ENCODE measurements at regions of chr17 and their contacts with region 1.

Region 1: GRCh38 chr17:67376737-67377487 is at the start of gene PITPNC1:
- DNase-seq: no peak
- H3K4me3 ChIP-seq: peak within 1 kb of the TSS; percentile 75
- CTCF ChIP-seq: peak; percentile 1

Region 2: GRCh38 chr17:67390646-67391384 is 13.9 kb after region 1 on chr17:
- CTCF ChIA-PET with region 1: interaction called, 92 read pairs
- POLR2A ChIA-PET with region 1: no interaction called
- DNase-seq: peak; percentile 91
- H3K4me3 ChIP-seq: peak overlapping the region; percentile 15; the same call in 1 of the 2 replicates
- CTCF ChIP-seq: no peak

Region 3: DNA sequence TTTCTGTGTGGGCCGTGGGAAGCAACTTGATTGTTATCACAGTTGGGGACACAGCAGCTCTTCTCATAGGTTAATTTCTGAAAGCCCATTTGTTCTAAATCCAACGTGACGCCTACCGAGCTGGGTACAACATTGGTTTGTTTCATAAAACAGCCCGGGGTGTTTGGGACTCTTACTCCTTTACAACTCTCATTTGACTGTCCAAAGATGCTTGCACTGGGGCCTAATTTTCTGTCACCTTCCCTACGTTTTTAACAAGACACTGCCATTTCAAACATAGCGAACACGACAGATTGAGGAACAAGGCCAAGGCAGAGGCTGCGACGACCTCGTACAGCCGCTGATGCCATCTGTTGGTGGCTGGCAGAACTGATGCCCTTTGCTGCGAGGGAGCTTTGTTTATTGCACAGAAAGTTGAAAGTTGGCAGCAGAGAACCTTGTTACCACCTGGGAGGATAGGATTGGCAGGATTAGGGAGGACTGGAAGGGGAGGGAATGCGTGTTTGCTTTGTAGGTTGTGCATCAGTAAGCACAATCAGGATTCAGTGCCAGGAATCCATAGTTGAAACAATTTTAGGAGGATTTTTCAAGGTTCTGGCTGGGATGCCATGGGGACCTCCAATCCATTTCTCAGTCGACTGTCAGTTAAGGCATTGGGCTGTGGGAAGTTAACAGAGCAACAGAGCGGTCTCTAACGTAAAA is 98.5 kb after region 1 on chr17:
- CTCF ChIA-PET with region 1: interaction called, 129 read pairs
- POLR2A ChIA-PET with region 1: no interaction called
- DNase-seq: no peak
- H3K4me3 ChIP-seq: no peak overlapping the region
- CTCF ChIP-seq: peak; percentile 95

Region 4: GRCh38 chr17:67584991-67585602 is 208.2 kb after region 1 on chr17:
- CTCF ChIA-PET with region 1: interaction called, 11 read pairs
- POLR2A ChIA-PET with region 1: no interaction called
- DNase-seq: no peak
- H3K4me3 ChIP-seq: no peak overlapping the region
- CTCF ChIP-seq: no peak

Region 5: DNA sequence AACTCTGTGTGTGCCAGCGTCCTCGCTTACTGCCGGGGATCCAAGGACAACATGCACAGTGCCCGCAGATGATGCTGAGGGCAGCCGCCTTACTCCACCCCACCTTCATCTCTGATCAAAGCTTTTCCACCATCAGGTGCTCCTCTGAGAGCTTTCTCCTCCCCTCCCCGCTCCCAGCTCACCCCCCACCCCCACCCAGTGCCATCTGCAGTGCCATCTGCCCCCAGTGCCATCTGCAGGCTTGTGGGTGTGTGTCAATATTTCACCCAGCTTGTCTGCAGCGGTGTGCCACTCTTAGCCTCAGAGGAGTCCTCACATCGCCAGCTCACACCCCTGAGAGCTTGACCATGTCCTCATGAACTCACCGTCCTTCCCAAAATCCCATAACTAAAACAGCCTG is 242.6 kb after region 1 on chr17:
- CTCF ChIA-PET with region 1: interaction called, 10 read pairs
- POLR2A ChIA-PET with region 1: no interaction called
- DNase-seq: no peak
- H3K4me3 ChIP-seq: no peak overlapping the region
- CTCF ChIP-seq: no peak

Region 6: DNA sequence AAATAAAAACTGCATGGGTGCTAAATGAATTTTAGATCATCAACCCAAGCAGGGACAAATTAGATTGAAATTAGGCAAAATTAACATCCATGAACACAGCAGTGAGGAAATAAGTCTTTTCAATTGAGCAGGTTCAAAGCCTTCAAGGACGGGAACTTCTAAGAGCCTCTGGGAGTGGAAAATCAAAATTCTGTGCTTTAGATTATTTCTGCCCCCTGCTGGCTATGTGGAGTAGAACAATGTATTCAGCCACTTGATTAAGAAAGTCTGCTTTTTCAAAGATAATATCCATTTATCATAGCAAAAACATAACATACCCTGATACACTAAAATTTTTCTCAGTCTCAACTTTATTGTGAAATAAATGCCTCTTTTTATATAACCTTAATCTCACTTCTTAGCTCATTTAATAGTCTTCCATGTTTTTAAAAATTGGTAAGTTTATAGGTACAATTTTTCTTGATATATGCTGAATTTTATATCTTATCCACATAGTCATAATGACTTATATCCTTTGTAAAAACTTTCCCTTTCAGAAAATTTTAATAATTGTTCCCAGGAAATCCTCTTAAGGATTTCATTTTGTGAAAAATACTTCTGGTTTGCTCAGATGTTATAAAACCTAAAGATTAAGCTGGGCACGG is 312.7 kb after region 1 on chr17:
- CTCF ChIA-PET with region 1: interaction called, 69 read pairs
- POLR2A ChIA-PET with region 1: no interaction called
- DNase-seq: peak; percentile 10
- H3K4me3 ChIP-seq: no peak overlapping the region
- CTCF ChIP-seq: peak; percentile 58

Region 7: DNA sequence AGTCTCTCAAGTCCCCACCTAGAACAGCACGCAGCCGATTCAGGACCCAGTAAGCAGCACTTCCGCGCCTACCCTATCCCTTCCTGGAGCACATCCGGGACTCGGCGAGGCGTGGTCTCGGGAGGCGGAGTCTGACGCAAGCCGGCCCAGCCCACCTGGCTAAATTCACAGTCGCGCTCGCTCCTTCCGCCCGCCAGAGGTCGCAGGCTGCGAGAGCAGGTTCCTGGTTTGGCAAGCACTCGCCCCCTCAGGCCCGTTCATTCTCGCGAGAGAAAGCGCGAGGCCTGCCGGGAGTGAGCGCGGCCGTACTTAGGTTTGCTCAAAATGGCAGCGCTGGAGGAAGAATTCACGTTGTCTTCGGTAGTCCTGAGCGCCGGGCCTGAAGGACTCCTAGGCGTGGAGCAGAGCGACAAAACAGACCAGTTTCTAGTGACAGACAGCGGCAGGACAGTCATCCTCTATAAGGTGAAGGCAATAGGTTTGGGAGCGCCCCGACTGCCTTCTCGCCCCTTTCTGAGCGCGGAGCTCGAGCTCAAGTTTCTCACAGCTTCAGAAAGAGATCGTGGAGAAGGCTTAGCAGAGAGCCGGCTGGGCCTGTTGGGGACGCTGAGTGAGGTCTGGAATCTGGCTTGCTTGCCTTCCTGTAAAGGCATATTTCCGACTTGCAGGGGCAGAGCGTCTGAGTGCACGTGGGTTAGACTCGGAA is 340.9 kb after region 1 on chr17 and contains the start of gene NOL11:
- CTCF ChIA-PET with region 1: interaction called, 18 read pairs
- POLR2A ChIA-PET with region 1: no interaction called
- DNase-seq: peak; percentile 86
- H3K4me3 ChIP-seq: peak within 1 kb of the TSS; percentile 98
- CTCF ChIP-seq: peak; percentile 98

Measured in AG04449 (cell line).